ENCODE measurements at regions of chr9 and their contacts with region 1.

Region 1: GRCh38 chr9:72038890-72039410 is 21.5 kb downstream of the C9orf57 start:
- DNase-seq: peak; percentile 78
- H3K4me3 ChIP-seq: no peak overlapping the region
- H3K27ac ChIP-seq: no peak overlapping the region
- H3K4me1 ChIP-seq: 0 out of 2 replicates have a peak, but pooled peaks cover 4% of the 10 kb centered on the region
- H3K27me3 ChIP-seq: peaks cover 6% of the 10 kb centered on the region

Region 2: GRCh38 chr9:71812385-71812784 is 226.6 kb before region 1 on chr9:
- in situ Hi-C with region 1: no loop called
- DNase-seq: peak; percentile 47
- H3K4me3 ChIP-seq: no peak overlapping the region
- H3K27ac ChIP-seq: no peak overlapping the region
- H3K4me1 ChIP-seq: peaks cover 14% of the 10 kb centered on the region
- H3K27me3 ChIP-seq: no peaks in the 10 kb centered on the region

Region 3: GRCh38 chr9:72207278-72207677 is 168.3 kb after region 1 on chr9:
- in situ Hi-C with region 1: no loop called
- DNase-seq: no peak
- H3K4me3 ChIP-seq: no peak overlapping the region
- H3K27ac ChIP-seq: no peak overlapping the region
- H3K4me1 ChIP-seq: no peaks in the 10 kb centered on the region
- H3K27me3 ChIP-seq: 0 out of 2 replicates have a peak, but pooled peaks cover 10% of the 10 kb centered on the region

Region 4: DNA sequence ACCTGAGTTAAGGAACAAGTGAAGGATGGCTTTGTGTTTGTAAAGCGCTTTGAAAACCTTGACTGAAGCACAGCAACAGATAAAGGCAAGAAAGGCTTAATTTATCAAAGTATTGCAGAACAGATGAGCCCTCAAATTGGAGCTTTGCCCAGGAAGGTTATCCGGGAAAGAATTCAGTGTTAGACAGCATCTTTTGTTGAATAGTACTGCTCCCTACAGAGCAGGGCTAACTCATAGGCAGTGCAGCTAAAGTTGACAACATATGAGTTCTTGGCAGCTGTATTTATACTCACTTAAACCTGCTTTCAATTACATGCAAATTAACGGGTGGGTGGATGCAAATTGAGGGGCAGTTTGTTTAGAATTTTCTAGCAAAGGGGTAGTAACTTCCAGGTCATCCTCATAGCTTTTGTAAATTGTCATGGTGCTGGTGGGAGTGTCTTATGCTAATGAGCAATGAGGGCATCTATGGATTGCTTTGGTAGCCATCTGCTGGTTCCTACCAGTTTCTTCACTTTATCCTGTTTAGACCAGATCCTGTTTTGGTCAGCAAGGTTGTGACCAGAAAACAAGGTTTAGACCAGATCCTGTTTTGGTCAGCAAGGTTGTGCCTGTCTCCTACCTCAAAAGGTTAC is 216.1 kb after region 1 on chr9:
- in situ Hi-C with region 1: no loop called
- DNase-seq: no peak
- H3K4me3 ChIP-seq: no peak overlapping the region
- H3K27ac ChIP-seq: no peak overlapping the region
- H3K4me1 ChIP-seq: no peaks in the 10 kb centered on the region
- H3K27me3 ChIP-seq: peaks cover 15% of the 10 kb centered on the region

Region 5: DNA sequence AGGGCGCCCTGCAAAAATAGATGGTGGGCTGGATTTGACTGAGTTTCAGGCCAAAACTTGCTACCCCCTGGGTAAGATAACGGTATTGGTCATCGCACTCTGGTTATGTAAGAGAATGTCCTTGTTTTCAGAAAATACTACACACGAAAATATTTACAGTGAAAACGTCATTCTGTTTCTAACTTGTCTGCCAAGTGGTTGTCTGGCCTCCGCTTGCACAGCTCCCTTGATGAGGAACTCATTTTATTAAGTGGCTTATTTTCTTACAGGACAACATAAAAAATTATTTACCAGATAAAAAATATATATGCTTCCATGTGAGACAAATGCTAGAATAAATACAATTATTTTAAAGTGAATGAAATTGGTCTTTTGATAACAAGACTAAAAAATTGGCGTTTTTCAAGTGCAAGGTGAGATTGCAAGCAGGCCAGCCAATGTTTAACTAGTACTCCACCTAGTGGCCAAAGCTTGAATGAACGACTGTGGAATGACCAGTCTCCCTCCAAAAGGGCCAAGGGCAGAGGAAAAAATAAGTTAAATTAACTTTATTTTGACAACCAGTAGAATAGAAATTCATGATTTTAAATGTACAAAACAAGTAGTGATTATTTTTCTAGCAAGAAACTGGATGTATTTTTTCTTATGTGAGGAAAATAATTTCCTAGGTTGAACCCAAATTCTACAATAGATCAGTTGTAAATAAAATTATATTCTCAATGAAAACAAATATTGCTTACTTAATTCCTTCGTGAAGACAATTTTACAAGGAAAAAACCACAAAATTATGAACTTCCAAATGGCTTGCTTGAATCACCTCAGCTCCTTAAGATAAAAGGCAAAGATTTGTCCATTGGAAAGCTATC is 232.9 kb after region 1 on chr9:
- in situ Hi-C with region 1: loop called (anchors 5 kb)
- DNase-seq: peak; percentile 67
- H3K4me3 ChIP-seq: no peak overlapping the region
- H3K27ac ChIP-seq: no peak overlapping the region
- H3K4me1 ChIP-seq: no peaks in the 10 kb centered on the region
- H3K27me3 ChIP-seq: peaks cover 7% of the 10 kb centered on the region

Region 6: GRCh38 chr9:72333709-72334108 is 294.8 kb after region 1 on chr9:
- in situ Hi-C with region 1: no loop called
- DNase-seq: no peak
- H3K4me3 ChIP-seq: no peak overlapping the region
- H3K27ac ChIP-seq: no peak overlapping the region
- H3K4me1 ChIP-seq: no peaks in the 10 kb centered on the region
- H3K27me3 ChIP-seq: no peaks in the 10 kb centered on the region

Region 7: GRCh38 chr9:73183917-73184861 is 1145.2 kb after region 1 on chr9:
- in situ Hi-C with region 1: loop called (anchors 25 kb)
- DNase-seq: peak; percentile 60
- H3K4me3 ChIP-seq: no peak overlapping the region
- H3K27ac ChIP-seq: no peak overlapping the region
- H3K4me1 ChIP-seq: peaks cover 25% of the 10 kb centered on the region
- H3K27me3 ChIP-seq: no peaks in the 10 kb centered on the region; the same call in 1 of the 2 replicates